ENCODE measurements at regions of chr6 and their contacts with region 1.

Region 1: DNA sequence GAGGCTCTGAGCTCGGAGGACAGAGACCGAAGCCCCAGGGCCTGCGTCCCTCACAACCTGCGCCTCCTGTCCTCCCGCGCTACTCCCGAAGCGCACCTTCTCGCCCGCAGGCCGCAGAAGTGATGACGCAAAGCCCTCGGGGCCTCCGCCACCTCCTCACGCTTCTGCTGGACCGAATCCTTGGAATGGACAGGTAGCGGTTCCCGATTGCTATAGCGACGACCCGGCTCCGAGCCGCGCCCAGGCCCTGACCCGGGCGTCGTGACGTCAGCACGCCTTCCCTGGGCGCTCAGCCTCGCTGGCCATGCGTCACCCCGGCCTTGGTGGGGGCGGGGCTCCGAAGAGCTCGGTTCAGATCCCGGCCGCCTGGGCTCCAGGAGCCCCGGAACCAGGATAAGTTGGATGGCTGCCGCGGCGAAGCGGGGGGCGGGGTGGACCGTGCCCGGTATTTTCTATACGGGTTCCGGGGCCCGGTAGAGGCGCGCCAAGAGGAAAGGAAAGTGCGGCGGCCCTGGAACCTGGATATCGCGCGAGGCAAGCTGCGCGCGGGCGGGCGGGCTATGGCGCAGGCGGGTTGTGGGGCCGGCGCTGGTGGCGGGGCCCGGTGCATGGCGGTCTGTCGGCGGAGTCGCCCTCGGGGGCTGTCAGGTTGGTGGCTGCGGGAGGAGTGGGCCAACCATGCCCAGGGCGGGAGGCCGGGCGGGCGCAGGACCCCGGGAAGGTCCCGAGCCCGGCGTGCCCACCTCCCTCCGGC is at the start of gene ZNF76:
- DNase-seq: peak; percentile 95
- ATAC-seq: peak; percentile 91
- H3K4me3 Mint-ChIP-seq: peak within 1 kb of the TSS; percentile 95
- H3K27ac Mint-ChIP-seq: peak within 1 kb of the TSS; percentile 94
- H3K4me1 Mint-ChIP-seq: peaks cover 31% of the 10 kb centered on the region
- H3K27me3 Mint-ChIP-seq: no peaks in the 10 kb centered on the region
- total RNA-seq, gene ZNF76: 63.0 to 66.0 TPM

Region 2: GRCh38 chr6:35247642-35248231 is 11.6 kb before region 1 on chr6:
- POLR2A ChIA-PET with region 1: interaction called, 10 read pairs
- DNase-seq: no peak
- ATAC-seq: peak; percentile 33
- H3K4me3 Mint-ChIP-seq: peak overlapping the region; percentile 4
- H3K27ac Mint-ChIP-seq: no peak overlapping the region
- H3K4me1 Mint-ChIP-seq: peaks cover 14% of the 10 kb centered on the region
- H3K27me3 Mint-ChIP-seq: no peaks in the 10 kb centered on the region